HEK293 (cell line): ENCODE measurements at regions of chr1 and their contacts with region 1.

Region 1: DNA sequence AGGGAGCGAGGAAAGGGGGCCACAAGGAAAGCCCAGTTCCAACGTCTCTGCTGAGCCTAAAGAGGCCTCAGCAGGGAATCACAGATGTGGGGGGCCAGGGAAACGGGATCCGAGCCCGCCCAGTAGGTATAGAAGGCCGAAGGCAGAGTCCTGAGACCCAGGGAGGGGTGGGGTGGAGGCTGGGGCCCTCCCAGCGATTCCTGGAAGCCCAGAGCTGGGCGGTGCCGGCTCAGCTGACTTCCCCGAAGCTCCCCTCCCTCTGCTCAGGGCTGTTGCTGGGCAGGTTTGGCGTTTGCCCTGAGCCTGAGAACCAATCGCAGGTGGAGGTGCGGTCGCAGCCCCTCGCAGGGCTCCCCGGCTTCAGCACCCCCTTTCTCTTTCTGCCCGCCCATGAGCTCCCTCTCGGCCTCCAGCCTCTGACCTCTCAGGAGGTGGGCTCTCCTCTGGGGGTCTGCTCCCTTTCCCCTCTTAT is 12.8 kb downstream of the ADAMTSL4 start:
- H3K4me3 ChIP-seq: peak overlapping the region; percentile 56
- H3K27ac ChIP-seq: peak overlapping the region; percentile 96
- H3K4me1 ChIP-seq: peaks cover 21% of the 10 kb centered on the region
- CTCF ChIP-seq: no peak

Region 2: DNA sequence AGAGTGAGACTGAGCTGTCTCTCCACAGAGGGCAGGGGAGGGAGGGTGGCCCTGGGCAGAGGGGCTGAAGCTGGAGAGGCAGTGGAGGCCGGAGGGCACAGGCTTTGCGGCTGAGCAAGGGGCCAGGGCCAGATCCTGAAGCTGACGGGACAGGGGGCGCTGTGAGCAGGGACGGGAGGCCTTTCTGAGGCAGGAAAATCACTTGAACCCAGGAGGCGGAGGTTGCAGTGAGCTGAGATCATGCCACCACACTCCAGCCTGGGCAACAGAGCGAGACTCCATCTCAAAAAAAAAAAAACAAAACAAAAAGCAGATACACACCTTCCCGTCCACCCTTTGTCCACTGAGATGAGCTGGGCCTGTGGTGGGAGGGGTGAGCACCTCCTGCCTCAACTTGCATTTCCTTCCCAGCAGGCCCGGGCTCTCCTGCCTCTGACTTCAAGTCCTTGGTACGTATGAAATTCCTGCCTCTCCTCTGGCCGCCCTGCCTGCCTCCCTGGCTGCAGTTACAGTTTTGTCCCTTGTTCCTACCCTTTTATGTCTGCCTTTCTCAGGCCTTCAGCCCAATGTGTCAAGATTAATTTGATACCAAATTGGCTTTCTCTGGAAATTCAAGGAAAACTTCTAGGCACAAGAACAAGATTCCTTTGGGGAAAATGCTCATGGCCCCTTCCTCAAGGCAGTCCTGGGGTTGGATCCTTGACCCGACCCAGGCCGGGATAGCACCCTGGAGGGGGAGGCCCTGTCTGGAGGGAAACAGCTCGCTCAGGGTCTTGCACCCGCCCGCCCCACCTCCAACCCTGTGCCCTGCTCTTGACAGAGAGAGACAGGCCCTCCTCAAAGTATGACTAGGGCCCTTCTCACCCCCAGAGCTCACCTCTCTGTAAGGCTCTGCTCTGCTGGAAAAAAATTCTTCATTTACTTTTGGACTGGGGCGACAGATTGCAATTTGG is 24.0 kb before region 1 on chr1:
- CTCF ChIA-PET with region 1: interaction called, 54 read pairs
- POLR2A ChIA-PET with region 1: interaction called, 3 read pairs
- H3K4me3 ChIP-seq: no peak overlapping the region
- H3K27ac ChIP-seq: no peak overlapping the region
- H3K4me1 ChIP-seq: no peaks in the 10 kb centered on the region
- CTCF ChIP-seq: no peak

Region 3: DNA sequence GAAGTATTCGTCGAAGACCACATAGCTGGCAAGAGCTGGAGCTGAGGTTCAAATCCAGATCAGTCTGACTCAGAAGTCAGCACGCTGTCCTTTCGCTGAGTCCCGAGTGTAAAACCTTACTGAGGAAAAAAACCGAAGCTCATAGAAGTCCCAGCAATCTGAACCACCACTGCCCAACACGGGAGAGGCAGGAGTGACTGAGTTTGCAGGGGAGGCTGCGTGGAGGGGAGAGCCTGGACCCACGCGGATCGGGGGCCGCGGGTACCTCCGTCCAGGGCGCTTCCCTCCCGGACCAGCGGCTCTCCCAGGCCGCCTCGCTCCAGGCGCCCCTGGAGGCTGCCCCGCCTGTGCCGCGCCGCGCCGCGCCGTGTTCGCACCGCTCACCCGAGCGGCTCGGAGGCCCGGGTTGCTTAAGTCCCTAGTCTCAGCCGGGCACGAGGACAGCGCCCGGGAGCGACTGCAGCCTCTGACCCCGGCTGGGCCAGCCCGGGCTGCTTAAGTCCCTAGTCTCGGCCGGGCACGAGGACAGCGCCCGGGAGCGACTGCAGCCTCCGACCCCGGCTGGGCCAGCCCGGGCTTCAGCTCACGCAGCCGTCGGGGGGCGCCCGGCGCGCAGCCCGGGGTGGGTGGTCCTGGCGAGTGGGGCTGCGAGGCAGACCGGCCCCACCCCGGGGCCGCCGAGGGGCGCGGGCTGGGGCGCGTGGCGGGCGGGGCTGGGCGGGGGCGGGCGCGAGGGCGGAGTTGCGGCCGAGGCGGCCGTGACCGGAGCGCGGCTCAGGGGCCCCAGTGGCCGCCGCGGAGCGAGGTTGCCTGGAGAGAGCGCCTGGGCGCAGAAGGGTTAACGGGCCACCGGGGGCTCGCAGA is 13.1 kb before region 1 on chr1 and contains the start of gene ADAMTSL4:
- CTCF ChIA-PET with region 1: interaction called, 73 read pairs
- POLR2A ChIA-PET with region 1: interaction called, 7 read pairs
- H3K4me3 ChIP-seq: peak within 1 kb of the TSS; percentile 50
- H3K27ac ChIP-seq: no peak within 1 kb of the TSS; the same call in 1 of the 2 replicates
- H3K4me1 ChIP-seq: no peaks in the 10 kb centered on the region; the same call in 1 of the 2 replicates
- CTCF ChIP-seq: peak; percentile 42; the same call in 1 of the 2 replicates

Region 4: GRCh38 chr1:150621497-150622302 is 59.7 kb after region 1 on chr1:
- CTCF ChIA-PET with region 1: interaction called, 62 read pairs
- POLR2A ChIA-PET with region 1: interaction called, 15 read pairs
- H3K4me3 ChIP-seq: no peak overlapping the region
- H3K27ac ChIP-seq: no peak overlapping the region
- H3K4me1 ChIP-seq: peaks cover 5% of the 10 kb centered on the region; the same call in 1 of the 2 replicates
- CTCF ChIP-seq: 0 out of 2 replicates have a peak, but pooled peaks have one; percentile 16

Region 5: DNA sequence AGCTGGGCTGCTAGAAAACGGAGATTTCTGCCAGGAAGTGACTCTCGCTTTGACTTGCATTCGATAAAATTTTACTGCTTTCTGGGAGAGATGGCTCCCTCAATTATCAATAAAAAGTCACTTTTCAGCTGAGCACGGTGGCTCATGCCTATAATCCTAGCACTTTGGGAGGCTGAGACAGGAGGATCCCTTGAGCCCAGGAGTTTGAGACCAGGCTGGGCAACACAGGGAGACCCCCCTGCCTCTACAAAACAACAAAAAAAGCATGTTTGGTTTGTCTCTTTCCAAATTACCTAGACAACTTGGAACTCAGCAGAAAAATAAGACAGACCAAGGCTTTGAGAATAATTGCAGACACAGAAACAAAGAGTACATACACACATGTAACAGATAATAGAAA is 80.3 kb after region 1 on chr1:
- CTCF ChIA-PET with region 1: interaction called, 10 read pairs
- POLR2A ChIA-PET with region 1: interaction called, 3 read pairs
- H3K4me3 ChIP-seq: no peak overlapping the region
- H3K27ac ChIP-seq: no peak overlapping the region
- H3K4me1 ChIP-seq: no peaks in the 10 kb centered on the region
- CTCF ChIP-seq: no peak

Region 6: GRCh38 chr1:150829743-150830142 is 267.7 kb after region 1 on chr1:
- CTCF ChIA-PET with region 1: interaction called, 10 read pairs
- POLR2A ChIA-PET with region 1: no interaction called
- H3K4me3 ChIP-seq: no peak overlapping the region
- H3K27ac ChIP-seq: no peak overlapping the region
- H3K4me1 ChIP-seq: no peaks in the 10 kb centered on the region
- CTCF ChIP-seq: no peak